Activated naive CD4-positive, alpha-beta T cell treated with anti-CD3 and anti-CD28 coated beads, Interleukin-2, amount 10 ng/mL, durations not matched to agents 7 days and 5 days (primary cell): ENCODE measurements at regions of chr12 and their contacts with region 1.

Region 1: GRCh38 chr12:6323340-6323994 is 13.0 kb downstream of the PLEKHG6 start:
- DNase-seq: peak; percentile 49
- H3K4me3 Mint-ChIP-seq: peak overlapping the region; percentile 1
- H3K27ac Mint-ChIP-seq: peak overlapping the region; percentile 80
- H3K4me1 Mint-ChIP-seq: peaks cover 41% of the 10 kb centered on the region
- H3K27me3 Mint-ChIP-seq: peaks cover 10% of the 10 kb centered on the region

Region 2: DNA sequence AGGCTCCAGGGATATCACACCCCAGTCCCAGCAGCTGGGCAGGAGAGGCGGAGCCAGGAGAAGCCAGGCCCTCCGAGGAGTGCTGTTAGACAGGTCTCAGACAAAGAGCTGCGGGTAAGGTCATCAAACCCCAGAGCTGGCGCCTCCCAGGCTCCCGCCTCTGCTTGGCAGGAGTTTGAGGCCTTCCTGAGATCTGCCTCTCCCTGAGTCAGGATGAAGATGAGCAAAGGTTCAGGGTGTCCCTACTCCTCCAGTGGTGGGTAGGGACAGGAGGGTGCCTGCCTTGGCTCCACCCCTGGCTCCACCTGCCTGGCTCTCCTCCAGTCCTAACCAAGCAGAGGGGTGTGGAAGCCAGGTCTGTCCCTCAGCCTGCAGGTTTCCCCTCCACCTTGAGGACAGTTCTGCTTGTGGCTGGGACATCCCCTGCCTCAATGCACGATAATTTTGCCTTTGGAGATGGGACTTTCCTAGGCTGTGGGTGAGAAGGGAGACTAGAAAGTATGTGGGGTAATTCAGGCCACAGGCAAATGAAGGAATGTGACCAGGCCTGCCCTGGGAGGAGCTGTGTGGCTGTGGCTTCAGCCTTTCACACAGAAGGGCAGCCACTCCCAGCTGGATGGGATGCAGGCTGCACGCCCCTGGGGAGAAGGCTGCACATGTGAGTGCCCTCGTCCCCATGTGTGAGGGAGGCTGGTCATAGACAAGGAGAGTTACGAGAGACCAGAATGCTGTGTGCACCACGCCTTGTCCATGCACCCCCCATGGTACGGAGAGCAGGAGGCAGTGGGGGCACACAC is 10.7 kb before region 1 on chr12:
- CTCF ChIA-PET with region 1: interaction called, 10 read pairs
- DNase-seq: no peak
- H3K4me3 Mint-ChIP-seq: no peak overlapping the region
- H3K27ac Mint-ChIP-seq: no peak overlapping the region
- H3K4me1 Mint-ChIP-seq: peaks cover 2% of the 10 kb centered on the region
- H3K27me3 Mint-ChIP-seq: peaks cover 89% of the 10 kb centered on the region

Region 3: DNA sequence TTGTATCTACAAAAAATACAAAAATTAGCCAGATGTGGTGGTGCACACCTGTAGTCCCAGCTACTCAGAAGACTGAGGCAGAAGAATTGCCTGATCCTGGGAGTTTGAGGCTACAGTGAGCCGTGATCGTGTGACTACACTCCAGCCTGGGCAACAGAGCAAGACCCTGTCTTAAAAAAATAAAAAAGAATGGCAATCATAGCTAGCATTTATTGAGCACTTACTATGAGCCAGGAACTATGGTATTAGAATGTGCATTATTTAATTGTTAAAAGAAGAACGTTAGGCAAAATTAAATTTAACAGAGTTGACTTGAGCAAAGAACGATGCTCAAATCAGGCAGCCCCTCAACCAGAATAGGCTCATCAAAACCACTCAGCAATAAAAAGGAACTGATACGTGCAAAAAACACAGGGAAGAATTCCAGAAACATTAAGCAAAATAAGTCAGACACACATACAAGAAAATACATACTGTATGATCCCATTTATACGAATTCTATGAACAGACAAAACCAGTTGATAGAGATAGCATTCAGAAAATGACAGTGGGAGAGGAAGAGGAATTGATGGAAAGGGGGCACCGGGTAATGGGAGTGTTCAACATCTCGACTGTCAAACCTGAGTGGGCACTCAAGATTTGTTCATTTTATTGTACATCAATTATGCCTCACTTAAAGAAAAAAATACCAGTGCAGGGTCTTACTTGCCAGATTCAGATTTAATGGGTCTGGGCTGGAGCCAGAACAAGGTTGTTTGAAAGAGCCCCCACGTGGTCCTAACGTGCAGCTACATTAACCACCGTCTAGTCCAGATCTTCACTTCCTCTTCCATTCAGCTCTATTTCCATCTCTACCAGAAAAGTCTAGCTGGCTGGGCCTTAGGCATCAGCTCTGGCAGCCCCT is 43.9 kb after region 1 on chr12:
- CTCF ChIA-PET with region 1: interaction called, 15 read pairs
- DNase-seq: peak; percentile 56
- H3K4me3 Mint-ChIP-seq: no peak overlapping the region
- H3K27ac Mint-ChIP-seq: peak overlapping the region; percentile 58
- H3K4me1 Mint-ChIP-seq: peaks cover 58% of the 10 kb centered on the region
- H3K27me3 Mint-ChIP-seq: peaks cover 13% of the 10 kb centered on the region

Region 4: GRCh38 chr12:6416596-6416995 is 93.1 kb after region 1 on chr12:
- CTCF ChIA-PET with region 1: no interaction called
- DNase-seq: no peak
- H3K4me3 Mint-ChIP-seq: no peak overlapping the region
- H3K27ac Mint-ChIP-seq: no peak overlapping the region
- H3K4me1 Mint-ChIP-seq: peaks cover 11% of the 10 kb centered on the region
- H3K27me3 Mint-ChIP-seq: peaks cover 24% of the 10 kb centered on the region